OCI-LY7 (cell line): ENCODE measurements at regions of chr10 and their contacts with region 1.

Region 1: DNA sequence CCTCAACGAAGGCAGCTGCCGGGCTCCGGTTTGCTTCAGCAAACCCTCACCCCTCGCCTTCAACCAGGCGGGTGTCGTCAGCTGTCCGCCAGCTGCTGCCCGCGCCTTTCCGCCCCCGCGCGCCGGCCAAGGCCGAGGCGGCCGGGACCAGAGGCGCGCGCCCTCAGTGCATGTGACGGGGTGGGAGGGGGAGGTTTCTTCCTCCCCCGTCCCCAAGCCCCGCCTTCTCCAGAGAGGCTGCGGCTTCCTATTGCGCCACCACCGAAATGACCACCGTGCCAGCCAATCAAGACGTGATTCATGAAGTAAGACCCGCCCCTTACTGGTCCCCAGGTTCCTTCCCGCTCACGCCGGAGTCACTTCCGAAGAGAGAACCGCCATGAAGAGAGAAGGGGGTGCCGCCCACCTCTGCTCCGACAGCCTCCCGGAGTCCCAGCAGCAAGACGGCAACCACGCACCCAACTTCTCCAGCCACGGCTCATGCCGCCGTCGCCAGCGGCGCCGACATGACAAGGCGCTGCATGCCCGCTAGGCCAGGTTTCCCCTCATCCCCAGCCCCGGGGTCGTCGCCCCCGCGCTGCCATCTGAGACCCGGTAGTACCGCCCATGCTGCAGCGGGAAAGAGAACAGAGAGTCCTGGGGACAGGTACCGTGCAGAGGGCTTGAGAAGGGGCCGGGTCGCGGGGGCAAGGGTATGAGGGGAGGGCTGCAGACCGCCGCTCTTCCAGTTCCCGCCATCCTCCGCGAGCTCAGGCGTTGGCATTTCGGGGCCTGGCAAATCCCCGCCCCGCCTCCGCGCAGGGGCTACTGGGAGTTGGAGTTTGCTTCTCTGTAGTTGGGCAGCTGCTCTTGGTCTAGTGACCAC is at the start of gene SLF2:
- DNase-seq: peak; percentile 98
- H3K4me3 ChIP-seq: peak within 1 kb of the TSS; percentile 97
- H3K27ac ChIP-seq: peak within 1 kb of the TSS; percentile 75
- H3K4me1 ChIP-seq: peaks cover 54% of the 10 kb centered on the region
- CTCF ChIP-seq: no peak
- total RNA-seq, gene SLF2: 50.9 and 58.2 TPM in 2 replicates

Region 2: DNA sequence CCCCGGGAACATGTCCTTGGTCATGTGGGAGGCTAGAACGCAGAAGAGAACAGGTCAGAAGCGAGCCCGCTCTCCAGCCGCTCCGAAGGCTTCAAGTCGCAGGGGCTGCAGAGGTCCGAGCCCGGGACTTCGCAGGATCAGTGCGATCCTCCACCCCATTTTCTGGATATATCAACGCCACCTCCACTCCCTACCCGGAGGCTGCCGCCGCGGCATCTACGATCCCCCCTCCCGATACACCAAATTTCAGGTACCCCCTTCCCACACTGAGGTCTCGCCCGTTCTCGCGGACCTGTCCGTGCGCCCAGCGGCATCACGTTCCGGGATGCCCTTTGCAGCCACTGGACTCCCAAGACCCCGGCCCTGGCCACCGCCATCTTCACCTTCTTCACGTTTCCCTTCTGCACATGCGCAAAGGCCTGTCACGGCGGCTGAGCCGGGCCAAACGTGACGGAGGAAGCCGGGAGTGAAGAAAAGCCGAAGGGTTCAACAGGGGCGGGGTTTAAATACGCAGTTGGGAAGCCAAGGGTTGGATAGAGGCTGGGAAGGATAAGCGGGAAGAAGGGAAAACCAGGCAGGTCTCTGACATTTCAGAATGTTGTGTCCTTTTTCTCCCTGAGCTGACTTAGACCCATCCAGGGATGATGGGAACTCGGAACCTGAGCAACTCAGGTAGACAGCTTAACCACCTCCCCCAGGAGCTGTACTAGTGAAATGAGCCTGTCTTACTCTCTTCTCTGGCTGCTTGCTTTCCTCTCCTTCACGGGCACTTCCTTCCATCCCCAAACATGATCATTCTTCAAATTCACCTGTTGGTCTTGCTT is 383.1 kb before region 1 on chr10 and contains the start of gene NDUFB8:
- CTCF ChIA-PET with region 1: no interaction called
- POLR2A ChIA-PET with region 1: interaction called, 3 read pairs
- intact Hi-C with region 1: loop called (anchors 2 kb)
- DNase-seq: peak; percentile 87
- H3K4me3 ChIP-seq: peak within 1 kb of the TSS; percentile 87
- H3K27ac ChIP-seq: peak within 1 kb of the TSS; percentile 55
- H3K4me1 ChIP-seq: peaks cover 32% of the 10 kb centered on the region
- CTCF ChIP-seq: no peak
- total RNA-seq, gene NDUFB8: 288 and 374 TPM in 2 replicates

Region 3: DNA sequence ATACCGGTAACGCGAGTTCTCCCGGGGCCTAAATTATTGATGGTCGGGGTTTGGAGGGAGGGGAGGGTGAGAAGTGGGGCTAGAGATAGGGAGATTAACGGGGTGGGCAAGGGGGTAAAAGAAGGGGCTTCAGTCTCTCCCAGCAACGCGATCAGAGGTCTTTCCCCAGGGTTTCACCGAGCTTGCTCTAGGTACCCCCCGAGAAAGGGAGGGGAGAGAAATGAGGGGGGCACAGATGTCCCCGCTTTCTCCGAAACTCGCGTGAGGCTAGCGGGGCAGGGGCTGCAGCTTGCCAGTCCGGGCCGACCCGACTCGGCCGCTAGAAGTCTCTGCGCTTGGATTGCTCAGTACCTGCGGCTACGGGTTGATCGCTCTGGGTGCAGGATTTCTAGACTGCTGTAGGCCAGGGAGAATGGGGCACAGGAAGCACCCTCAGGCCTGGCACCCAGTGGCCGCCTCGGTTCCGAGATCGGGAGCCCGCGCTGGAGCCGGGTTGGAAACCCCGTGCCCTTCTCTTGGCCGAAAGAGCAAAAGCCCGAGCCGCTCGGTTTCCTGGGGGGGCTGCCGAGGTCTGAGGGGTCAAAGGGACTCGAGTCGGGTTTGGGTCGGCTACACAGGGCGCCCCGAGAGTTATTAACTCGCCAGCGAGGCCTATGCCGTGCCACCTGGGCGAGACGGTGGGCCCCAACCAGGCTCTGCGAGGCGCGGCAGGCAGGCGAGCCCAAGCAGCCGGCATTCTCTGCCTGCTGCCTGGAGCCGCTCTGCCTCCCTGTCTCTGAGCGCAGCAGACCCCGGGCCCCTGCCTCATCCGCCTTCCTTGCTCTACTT is 164.4 kb before region 1 on chr10:
- CTCF ChIA-PET with region 1: no interaction called
- POLR2A ChIA-PET with region 1: no interaction called
- intact Hi-C with region 1: no loop called
- DNase-seq: no peak
- H3K4me3 ChIP-seq: no peak overlapping the region
- H3K27ac ChIP-seq: no peak overlapping the region
- H3K4me1 ChIP-seq: no peaks in the 10 kb centered on the region
- CTCF ChIP-seq: no peak